Left colon (tissue), 2 donors: ENCODE measurements at regions of chr4 and their contacts with region 1.

Region 1: DNA sequence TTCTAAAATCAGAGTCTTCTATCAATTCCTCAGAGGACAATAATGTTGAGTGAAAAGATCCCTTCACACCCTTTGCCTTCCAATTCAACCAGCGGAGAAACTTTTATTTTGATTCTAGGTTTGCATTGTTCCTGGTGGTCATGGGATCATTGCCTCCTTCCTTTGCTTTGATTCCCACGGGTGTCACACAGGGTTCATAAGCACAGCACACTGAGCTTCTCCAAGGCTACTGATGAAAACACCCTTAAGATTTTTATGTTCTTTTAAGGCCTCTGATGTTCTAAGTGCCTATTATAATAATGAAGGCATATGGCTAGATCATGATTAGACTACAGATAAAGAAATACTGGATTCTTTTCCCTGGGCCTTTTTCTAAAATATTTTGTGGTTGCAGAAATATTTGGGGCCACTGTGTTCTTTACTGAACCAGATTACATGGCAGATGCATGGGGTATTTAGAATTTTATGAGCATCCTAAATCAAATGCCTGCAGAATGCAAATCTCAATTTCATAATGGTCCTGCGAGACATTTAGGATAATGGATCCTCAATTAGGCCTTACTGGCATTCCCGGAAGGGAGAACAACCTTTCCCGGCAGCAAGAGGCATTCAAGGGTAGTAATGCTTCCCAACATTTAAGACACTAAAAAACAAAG is 43.9 kb upstream of the FGFBP2 start:
- DNase-seq: no peak
- ATAC-seq: no peak

Region 2: GRCh38 chr4:15536552-15537499 is 470.1 kb before region 1 on chr4:
- intact Hi-C with region 1: no loop called
- DNase-seq: no peak
- ATAC-seq: no peak

Region 3: DNA sequence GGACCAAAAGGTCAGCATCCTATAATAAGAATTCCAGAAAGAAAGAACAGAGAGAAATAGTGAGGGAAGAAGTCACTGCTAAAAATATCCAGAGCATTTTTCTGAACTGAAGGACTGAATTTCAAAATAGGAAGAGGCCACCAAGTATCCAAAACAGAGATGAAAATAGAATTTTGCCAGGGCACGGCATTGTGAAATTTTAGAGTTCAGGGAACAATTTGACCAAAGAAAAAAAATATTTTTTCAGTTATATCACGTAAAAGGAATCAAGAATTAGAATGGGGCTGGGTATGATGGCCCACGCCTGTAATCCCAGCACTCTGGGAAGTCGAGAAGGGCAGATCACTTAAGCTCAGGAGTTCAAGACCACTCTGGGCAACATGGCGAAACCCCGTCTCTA is 133.8 kb before region 1 on chr4:
- intact Hi-C with region 1: loop called in 1 of 2 experiments (anchors 5 kb)
- DNase-seq: no peak
- ATAC-seq: no peak